ENCODE measurements at regions of chr2 and their contacts with region 1.

Region 1: GRCh38 chr2:231124838-231125568 is at the start of gene HTR2B:
- DNase-seq: peak in 1 of 2 experiments; percentile 38
- ATAC-seq: 0 out of 6 replicates have a peak, but pooled peaks of 1 of the 2 experiments have one; percentile 16
- H3K4me3 ChIP-seq: no peak within 1 kb of the TSS
- H3K27ac ChIP-seq: no peak within 1 kb of the TSS
- H3K4me1 ChIP-seq: peaks cover 95% of the 10 kb centered on the region
- CTCF ChIP-seq: no peak
- EP300 ChIP-seq: no peak
- POLR2A ChIP-seq: no peak
- RAD21 ChIP-seq: no peak
- polyA plus RNA-seq, gene HTR2B: 1.4 and 1.5 TPM in 2 replicates

Region 2: DNA sequence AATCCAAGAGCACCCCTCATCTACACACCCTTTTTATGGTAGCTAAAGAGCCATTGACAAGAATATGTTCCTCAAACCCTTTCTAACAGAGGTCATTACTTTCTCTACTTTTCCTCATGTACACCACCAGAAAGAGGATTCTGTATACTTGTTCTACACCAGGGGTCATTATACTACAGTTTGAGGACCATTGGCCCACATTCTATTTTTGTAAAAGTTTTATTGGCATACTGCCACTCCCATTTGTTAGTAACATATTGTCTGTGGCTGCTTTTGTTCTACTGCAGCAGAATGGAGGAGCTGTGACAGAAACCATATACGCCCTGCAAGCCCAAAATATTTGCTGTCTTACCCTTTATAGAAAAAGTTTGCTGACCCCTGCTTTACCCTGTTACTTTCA is 14.5 kb before region 1 on chr2:
- CTCF ChIA-PET with region 1: interaction called, 10 read pairs
- POLR2A ChIA-PET with region 1: no interaction called
- DNase-seq: no peak
- ATAC-seq: no peak; a peak in 3 of 6 replicates
- H3K4me3 ChIP-seq: no peak overlapping the region
- H3K27ac ChIP-seq: no peak overlapping the region
- H3K4me1 ChIP-seq: peaks cover 12% of the 10 kb centered on the region; the same call in 1 of the 3 replicates
- CTCF ChIP-seq: no peak
- EP300 ChIP-seq: no peak
- POLR2A ChIP-seq: no peak
- RAD21 ChIP-seq: no peak